ENCODE measurements at regions of chr15 and their contacts with region 1.

Region 1: DNA sequence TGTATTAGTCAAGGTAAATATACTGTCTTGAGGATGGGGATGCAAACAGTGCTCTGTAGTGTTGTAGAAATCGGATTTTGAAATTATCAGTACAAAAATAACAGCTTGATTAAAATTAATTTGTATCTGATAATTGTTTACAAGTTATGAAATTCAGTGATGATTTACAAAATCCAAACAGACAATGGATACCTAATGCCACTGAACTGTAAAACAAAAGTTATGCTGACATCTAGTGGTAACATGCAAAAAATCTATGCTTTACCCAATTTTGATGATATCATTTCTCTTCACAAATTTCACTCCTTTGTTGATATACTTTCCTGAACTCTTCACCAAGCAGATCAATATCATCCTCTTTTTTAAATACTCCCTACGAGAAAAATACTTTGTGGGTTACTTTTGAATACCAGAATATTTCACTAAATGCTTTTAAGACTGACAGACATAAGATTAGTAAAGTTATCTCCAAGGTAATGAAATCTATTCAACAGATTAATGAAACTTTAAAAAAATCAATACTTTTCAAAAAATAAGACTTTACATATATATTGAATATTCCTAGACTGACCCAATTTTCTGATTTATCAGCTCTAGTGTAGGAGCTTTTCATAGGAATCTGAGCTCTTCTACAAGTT is 36.0 kb downstream of the MNS1 start:
- DNase-seq: no peak
- ATAC-seq: 0 out of 2 replicates have a peak, but pooled peaks have one; percentile 24
- H3K4me3 Mint-ChIP-seq: no peak overlapping the region
- H3K27ac Mint-ChIP-seq: no peak overlapping the region
- H3K4me1 Mint-ChIP-seq: no peaks in the 10 kb centered on the region
- H3K27me3 Mint-ChIP-seq: no peaks in the 10 kb centered on the region
- CTCF ChIP-seq: peak; percentile 18; the same call in 1 of the 2 replicates

Region 2: DNA sequence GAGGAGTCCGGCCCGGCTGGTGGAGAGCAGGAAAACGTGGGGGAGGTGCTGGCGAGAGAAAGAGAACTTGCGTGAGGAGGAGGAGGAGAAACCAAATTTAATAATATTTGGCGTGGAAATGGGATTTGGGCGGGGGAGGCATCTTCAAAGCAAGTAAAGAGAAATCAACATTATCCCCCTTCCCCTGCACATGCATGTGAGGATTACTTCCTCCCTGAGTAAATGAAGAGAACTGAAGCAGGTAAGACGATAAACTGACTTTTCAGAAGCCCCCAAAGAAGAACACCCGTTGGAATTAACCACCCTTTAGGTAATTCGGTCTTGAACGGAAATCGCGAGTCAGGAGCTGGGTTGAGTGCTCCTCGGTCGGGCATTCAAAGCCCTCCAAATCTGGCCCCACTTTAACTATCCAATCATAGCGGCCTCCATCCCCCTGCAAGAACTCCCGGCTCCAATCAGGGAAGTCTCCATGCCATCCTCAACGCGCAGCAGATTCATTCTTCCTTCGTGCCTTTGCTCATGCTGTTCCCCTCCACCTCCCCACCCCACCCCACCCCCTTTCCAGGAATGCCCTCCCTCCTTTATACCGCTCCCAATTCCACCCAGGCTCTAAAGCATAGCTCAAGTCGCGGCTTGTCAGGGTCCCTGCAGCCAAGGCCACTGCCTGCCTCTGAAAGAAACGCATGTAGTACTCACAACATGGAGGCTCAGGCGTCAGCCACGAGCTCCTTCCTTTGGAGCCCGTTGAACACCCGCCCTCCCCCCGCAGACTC is 184.7 kb before region 1 on chr15:
- CTCF ChIA-PET with region 1: interaction called, 36 read pairs
- POLR2A ChIA-PET with region 1: no interaction called
- DNase-seq: peak; percentile 46
- ATAC-seq: peak; percentile 74
- H3K4me3 Mint-ChIP-seq: peak overlapping the region; percentile 83
- H3K27ac Mint-ChIP-seq: peak overlapping the region; percentile 98
- H3K4me1 Mint-ChIP-seq: peaks cover 43% of the 10 kb centered on the region
- H3K27me3 Mint-ChIP-seq: no peaks in the 10 kb centered on the region
- CTCF ChIP-seq: no peak

Measured in WTC11 (cell line).